IMR-90 (cell line): ENCODE measurements at regions of chr9 and their contacts with region 1.

Region 1: DNA sequence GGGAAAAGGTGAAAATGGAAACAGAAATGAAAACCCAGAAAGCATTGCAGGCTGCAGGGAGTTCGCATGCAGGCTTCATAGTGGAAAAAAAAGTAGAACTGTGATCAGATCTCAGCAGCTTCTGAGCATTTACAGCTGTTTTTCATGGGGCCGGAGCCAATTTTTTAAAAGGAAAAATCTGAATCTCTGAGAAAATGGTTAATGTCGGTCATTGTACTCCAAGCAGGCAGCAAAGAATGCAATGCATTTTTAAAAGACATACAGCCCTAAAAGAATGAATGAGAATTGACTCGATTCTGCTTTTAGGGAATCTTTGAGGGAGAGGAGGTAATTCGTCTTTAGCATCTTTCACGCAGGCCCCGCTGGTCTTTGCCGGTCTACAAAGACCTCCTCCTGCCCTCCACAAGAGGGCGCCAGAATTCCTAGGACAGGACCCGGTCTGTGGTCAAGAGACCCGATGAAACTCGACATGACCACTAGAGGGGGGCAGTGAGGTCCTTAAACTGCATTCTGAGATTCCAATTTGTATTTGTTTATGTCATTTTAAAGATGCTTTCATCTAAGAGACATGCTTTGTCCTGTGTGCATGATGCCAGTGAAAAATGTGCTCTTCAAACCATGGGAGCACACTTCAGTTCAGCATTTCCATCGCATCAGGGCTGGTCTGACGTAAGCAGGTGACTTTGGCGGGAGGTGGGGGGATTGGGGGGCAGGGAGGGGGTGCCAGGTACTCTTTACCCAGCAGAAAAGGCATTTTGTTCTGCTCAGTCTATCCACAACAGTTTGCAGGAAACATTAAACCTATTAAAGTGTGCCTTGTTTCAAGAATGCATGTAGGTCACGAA is 43.7 kb upstream of the TMEM252 start:
- DNase-seq: peak; percentile 84
- ATAC-seq: peak; percentile 100
- H3K4me3 ChIP-seq: no peak overlapping the region
- H3K27ac ChIP-seq: no peak overlapping the region
- H3K4me1 ChIP-seq: no peaks in the 10 kb centered on the region
- H3K27me3 ChIP-seq: peaks cover 1% of the 10 kb centered on the region; the same call in 1 of the 2 replicates
- CTCF ChIP-seq: peak; percentile 100
- POLR2A ChIP-seq: no peak
- RAD21 ChIP-seq: peak; percentile 84

Region 2: GRCh38 chr9:68747043-68747533 is 162.7 kb after region 1 on chr9:
- CTCF ChIA-PET with region 1: no interaction called
- POLR2A ChIA-PET with region 1: no interaction called
- dilution Hi-C with region 1: no loop called
- in situ Hi-C with region 1: no loop called
- intact Hi-C with region 1: no loop called
- DNase-seq: no peak
- ATAC-seq: peak; percentile 24; the same call in 1 of the 2 replicates
- H3K4me3 ChIP-seq: no peak overlapping the region
- H3K27ac ChIP-seq: no peak overlapping the region
- H3K4me1 ChIP-seq: no peaks in the 10 kb centered on the region
- H3K27me3 ChIP-seq: no peaks in the 10 kb centered on the region; the same call in 1 of the 2 replicates
- CTCF ChIP-seq: no peak
- POLR2A ChIP-seq: no peak
- RAD21 ChIP-seq: no peak

Region 3: GRCh38 chr9:68779558-68780384 is 195.4 kb after region 1 on chr9:
- CTCF ChIA-PET with region 1: no interaction called
- POLR2A ChIA-PET with region 1: no interaction called
- dilution Hi-C with region 1: no loop called
- in situ Hi-C with region 1: no loop called
- intact Hi-C with region 1: loop called (anchors 2 kb)
- DNase-seq: peak; percentile 92
- ATAC-seq: peak; percentile 93
- H3K4me3 ChIP-seq: peak overlapping the region; percentile 92
- H3K27ac ChIP-seq: peak overlapping the region; percentile 80
- H3K4me1 ChIP-seq: peaks cover 4% of the 10 kb centered on the region
- H3K27me3 ChIP-seq: no peaks in the 10 kb centered on the region
- CTCF ChIP-seq: peak; percentile 32; the same call in 1 of the 2 replicates
- POLR2A ChIP-seq: peak; percentile 73; the same call in 1 of the 2 replicates
- RAD21 ChIP-seq: peak; percentile 10; the same call in 1 of the 2 replicates

Region 4: GRCh38 chr9:68844631-68845612 is 260.5 kb after region 1 on chr9:
- CTCF ChIA-PET with region 1: no interaction called
- POLR2A ChIA-PET with region 1: no interaction called
- dilution Hi-C with region 1: no loop called
- in situ Hi-C with region 1: no loop called
- intact Hi-C with region 1: loop called (anchors 1 kb)
- DNase-seq: peak; percentile 8
- ATAC-seq: no peak
- H3K4me3 ChIP-seq: no peak overlapping the region
- H3K27ac ChIP-seq: no peak overlapping the region
- H3K4me1 ChIP-seq: no peaks in the 10 kb centered on the region
- H3K27me3 ChIP-seq: no peaks in the 10 kb centered on the region
- CTCF ChIP-seq: peak; percentile 39
- POLR2A ChIP-seq: no peak
- RAD21 ChIP-seq: peak; percentile 35

Region 5: GRCh38 chr9:68949271-68950000 is 365.0 kb after region 1 on chr9:
- CTCF ChIA-PET with region 1: no interaction called
- POLR2A ChIA-PET with region 1: no interaction called
- dilution Hi-C with region 1: no loop called
- in situ Hi-C with region 1: no loop called
- intact Hi-C with region 1: loop called (anchors 1 kb)
- DNase-seq: no peak
- ATAC-seq: no peak
- H3K4me3 ChIP-seq: no peak overlapping the region
- H3K27ac ChIP-seq: no peak overlapping the region
- H3K4me1 ChIP-seq: no peaks in the 10 kb centered on the region
- H3K27me3 ChIP-seq: no peaks in the 10 kb centered on the region; the same call in 1 of the 2 replicates
- CTCF ChIP-seq: 0 out of 2 replicates have a peak, but pooled peaks have one; percentile 9
- POLR2A ChIP-seq: no peak
- RAD21 ChIP-seq: no peak

Region 6: DNA sequence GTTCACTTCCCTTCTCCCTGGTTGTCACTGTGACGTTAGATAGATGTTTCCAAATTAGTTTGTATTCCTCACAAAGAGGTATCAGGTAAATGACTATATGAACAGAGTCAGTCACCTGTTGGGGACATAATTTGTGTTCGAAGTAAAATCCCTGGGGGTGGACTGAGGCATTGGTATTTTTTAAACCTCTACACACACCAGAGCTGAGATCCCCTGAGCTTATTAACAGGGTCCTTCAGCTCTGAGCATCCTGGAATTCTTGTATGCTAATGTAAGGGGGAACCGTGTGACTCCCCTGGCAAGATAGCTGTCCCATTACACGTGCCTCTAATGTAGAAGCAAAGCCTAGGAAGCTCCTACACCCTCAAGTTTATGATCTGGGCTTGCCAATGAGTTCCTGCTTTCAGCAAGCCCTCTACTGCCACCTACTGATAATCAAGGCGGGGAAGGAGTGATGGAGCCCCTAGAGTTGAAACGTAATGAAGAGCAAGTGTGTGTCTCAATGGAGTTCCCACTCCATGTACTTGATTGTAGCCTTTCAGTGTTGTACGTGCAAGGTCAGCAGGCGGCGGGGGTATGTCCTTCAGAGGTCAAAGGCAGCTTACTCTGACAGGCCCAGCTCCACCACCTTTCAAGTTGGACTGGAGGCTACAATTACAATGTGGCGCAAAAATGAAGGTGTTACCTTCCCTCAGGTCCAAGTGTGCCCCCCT is 415.1 kb after region 1 on chr9:
- CTCF ChIA-PET with region 1: interaction called, 3 read pairs
- POLR2A ChIA-PET with region 1: no interaction called
- dilution Hi-C with region 1: no loop called
- in situ Hi-C with region 1: loop called (anchors 10 kb)
- intact Hi-C with region 1: loop called (anchors 1 kb)
- DNase-seq: peak; percentile 65
- ATAC-seq: peak; percentile 95
- H3K4me3 ChIP-seq: no peak overlapping the region
- H3K27ac ChIP-seq: no peak overlapping the region
- H3K4me1 ChIP-seq: no peaks in the 10 kb centered on the region
- H3K27me3 ChIP-seq: peaks cover 11% of the 10 kb centered on the region
- CTCF ChIP-seq: peak; percentile 90
- POLR2A ChIP-seq: no peak
- RAD21 ChIP-seq: peak; percentile 75

Region 7: DNA sequence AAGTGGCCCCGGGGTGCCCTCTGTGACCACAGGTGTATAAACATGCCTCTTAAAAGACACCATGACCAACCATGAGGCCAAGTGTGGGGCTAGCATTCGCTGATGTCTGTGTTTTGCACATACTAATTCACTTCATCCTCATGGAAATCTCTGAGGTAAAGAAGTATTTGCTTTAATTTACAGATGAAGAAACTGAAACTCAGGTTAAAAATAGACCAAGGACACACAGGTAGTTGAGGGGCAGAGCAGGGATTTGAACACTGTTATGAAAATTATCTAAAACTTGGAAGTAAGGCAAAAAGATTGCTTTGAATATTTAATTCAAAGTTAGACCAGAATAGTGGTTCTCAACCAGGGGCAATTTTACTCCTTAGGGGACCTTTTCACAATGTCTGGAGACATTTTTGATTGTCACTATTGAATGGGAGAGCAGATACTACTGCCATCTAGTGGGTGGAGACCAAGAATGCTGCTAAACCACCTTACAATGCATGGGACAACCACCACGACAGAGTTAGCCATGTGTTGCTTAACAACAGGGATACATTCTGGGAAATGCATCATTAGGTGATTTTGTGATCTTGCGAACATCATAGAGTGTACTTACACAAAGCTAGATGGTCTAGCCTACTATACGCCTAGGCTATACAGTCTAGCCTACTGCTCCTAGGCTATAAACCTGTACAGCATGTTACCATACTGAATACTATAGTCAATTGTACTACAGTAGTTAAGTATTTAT is 443.1 kb after region 1 on chr9:
- CTCF ChIA-PET with region 1: no interaction called
- POLR2A ChIA-PET with region 1: no interaction called
- dilution Hi-C with region 1: no loop called
- in situ Hi-C with region 1: no loop called
- intact Hi-C with region 1: loop called (anchors 1 kb)
- DNase-seq: peak; percentile 45
- ATAC-seq: peak; percentile 88
- H3K4me3 ChIP-seq: no peak overlapping the region
- H3K27ac ChIP-seq: no peak overlapping the region
- H3K4me1 ChIP-seq: no peaks in the 10 kb centered on the region
- H3K27me3 ChIP-seq: peaks cover 11% of the 10 kb centered on the region
- CTCF ChIP-seq: peak; percentile 67
- POLR2A ChIP-seq: no peak
- RAD21 ChIP-seq: peak; percentile 53